Calu3 (cell line): ENCODE measurements at regions of chr5 and their contacts with region 1.

Region 1: GRCh38 chr5:111223889-111224563 is at the start of gene CAMK4:
- DNase-seq: peak; percentile 87
- H3K4me3 Mint-ChIP-seq: peak within 1 kb of the TSS; percentile 92
- H3K27ac Mint-ChIP-seq: peak within 1 kb of the TSS; percentile 62
- H3K4me1 Mint-ChIP-seq: peaks cover 35% of the 10 kb centered on the region
- H3K27me3 Mint-ChIP-seq: no peaks in the 10 kb centered on the region
- CTCF ChIP-seq: no peak
- total RNA-seq, gene CAMK4: 19.4 and 23.3 TPM in 2 replicates

Region 2: DNA sequence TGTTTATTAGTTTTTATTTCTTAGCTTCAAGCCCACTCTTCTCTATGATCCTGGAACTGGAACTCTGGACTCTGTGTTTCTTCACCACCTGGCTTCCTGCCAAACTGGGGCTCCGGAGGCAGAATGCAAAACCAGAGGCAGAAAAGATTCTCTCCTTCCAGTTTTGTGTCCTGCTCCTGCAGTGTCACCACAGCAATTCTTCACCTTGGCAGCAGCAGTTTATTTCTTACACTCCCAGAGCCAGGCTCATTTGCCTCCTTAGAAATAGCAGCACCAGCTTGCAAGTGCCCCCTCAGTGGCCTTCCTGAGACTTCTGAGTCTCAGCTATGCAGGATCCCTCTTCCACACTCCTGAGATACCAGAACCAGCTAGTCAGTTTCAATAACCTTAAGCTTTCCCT is 26.5 kb before region 1 on chr5:
- CTCF ChIA-PET with region 1: no interaction called
- intact Hi-C with region 1: no loop called
- DNase-seq: peak; percentile 44
- H3K4me3 Mint-ChIP-seq: no peak overlapping the region
- H3K27ac Mint-ChIP-seq: no peak overlapping the region
- H3K4me1 Mint-ChIP-seq: no peaks in the 10 kb centered on the region
- H3K27me3 Mint-ChIP-seq: no peaks in the 10 kb centered on the region
- CTCF ChIP-seq: no peak

Region 3: GRCh38 chr5:111261610-111262009 is 37.6 kb after region 1 on chr5:
- CTCF ChIA-PET with region 1: interaction called, 4 read pairs
- intact Hi-C with region 1: loop called (anchors 2 kb)
- DNase-seq: peak; percentile 51
- H3K4me3 Mint-ChIP-seq: no peak overlapping the region
- H3K27ac Mint-ChIP-seq: no peak overlapping the region
- H3K4me1 Mint-ChIP-seq: peaks cover 12% of the 10 kb centered on the region
- H3K27me3 Mint-ChIP-seq: no peaks in the 10 kb centered on the region
- CTCF ChIP-seq: no peak

Region 4: DNA sequence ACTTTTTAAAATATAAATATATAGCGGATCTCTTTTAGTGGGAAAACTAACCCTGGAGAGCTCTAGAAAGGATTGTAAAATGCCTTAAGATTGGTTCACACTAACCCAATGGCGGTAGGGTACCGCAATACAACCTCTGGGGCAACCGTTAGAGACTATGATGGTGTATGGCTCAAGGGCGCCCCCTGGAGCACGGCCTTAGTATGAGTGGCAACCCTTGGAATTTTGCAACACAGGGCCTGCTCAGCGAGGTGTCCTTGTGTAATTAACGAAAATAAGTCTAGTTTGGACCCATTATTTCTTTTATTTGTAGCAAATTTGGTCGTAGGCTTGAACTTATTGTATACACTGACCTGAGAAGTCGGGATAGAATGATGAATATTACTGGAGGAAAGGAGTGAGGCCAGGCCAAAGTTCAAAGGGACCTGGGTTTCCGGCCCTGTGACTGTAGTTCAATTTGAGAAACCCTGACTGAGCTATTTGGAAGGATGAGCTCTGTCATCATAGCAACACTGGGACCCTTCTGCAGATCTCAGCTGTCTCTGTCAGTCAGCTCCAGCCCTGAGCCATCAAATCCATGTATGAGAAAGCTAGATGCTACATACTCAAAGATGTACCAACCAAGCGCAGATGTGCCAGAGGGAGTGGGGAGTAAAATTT is 54.9 kb after region 1 on chr5:
- CTCF ChIA-PET with region 1: no interaction called
- intact Hi-C with region 1: loop called (anchors 2 kb)
- DNase-seq: peak; percentile 90
- H3K4me3 Mint-ChIP-seq: no peak overlapping the region
- H3K27ac Mint-ChIP-seq: no peak overlapping the region
- H3K4me1 Mint-ChIP-seq: no peaks in the 10 kb centered on the region
- H3K27me3 Mint-ChIP-seq: no peaks in the 10 kb centered on the region
- CTCF ChIP-seq: peak; percentile 96